A673 (cell line): ENCODE measurements at regions of chr15 and their contacts with region 1.

Region 1: DNA sequence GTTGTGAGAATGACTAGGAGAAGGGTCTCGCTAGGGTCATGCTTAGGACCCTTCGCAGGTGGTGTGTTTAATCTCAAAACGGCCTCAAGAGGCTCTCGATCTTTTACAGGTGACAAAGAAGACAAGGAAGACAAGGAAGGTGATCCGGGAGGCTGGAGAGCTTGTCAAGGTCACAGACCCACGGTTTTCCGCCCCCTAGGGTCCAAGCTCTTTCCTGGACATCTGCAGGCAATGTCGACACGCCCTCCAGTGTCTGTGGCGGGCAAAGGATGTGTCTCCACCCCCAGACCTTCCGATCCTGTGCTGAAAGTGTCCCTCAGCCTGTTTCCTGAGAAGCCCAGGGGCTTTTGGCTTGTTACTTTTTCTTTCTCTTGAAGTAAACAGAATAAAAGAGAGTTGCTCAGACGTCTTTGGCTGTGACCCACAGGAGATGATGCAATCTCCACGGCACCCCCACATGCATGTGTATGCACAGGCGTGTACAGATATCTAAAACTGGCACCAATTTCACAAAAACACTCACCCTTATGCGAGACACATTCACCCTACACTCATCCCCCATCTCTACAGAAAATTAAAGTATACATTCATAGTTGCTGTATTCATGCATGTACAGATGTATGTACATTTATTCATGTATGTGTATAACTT is 108.8 kb downstream of the KLF13 start:
- DNase-seq: no peak
- H3K4me3 ChIP-seq: no peak overlapping the region
- H3K27ac ChIP-seq: no peak overlapping the region
- H3K4me1 ChIP-seq: no peaks in the 10 kb centered on the region
- H3K27me3 ChIP-seq: no peaks in the 10 kb centered on the region
- CTCF ChIP-seq: peak; percentile 35; the same call in 1 of the 2 replicates

Region 2: DNA sequence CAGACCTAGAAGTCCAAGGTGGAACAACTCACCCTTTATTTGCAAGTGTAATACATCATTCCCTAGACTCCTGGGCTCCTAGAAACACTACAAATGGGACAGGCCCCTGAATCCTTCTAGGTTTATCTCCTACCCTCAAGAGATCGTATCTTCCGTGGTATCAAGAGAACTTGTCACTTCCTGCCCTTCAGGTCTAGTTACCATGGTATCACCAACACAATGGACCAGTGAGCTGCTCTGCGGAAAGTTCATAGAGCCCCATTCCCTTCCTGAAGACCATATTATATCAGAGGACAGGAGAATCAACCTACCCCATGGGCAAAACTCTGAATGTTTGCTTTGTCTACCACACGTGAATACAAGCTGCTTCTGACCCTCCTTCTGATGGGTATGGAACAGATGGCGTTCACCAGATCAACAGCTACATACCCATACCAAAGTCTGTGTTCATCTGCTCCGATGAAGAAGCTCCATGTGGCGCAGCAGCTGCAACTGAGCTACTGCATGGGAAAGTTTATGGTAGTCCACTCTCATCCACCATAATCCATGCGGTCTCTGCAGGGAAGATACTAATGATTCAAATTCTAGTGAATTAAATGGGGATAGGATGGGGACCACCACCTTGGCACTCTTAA is 193.4 kb before region 1 on chr15:
- CTCF ChIA-PET with region 1: no interaction called
- POLR2A ChIA-PET with region 1: no interaction called
- intact Hi-C with region 1: no loop called
- DNase-seq: no peak
- H3K4me3 ChIP-seq: no peak overlapping the region
- H3K27ac ChIP-seq: no peak overlapping the region
- H3K4me1 ChIP-seq: peaks cover 4% of the 10 kb centered on the region
- H3K27me3 ChIP-seq: no peaks in the 10 kb centered on the region
- CTCF ChIP-seq: no peak

Region 3: DNA sequence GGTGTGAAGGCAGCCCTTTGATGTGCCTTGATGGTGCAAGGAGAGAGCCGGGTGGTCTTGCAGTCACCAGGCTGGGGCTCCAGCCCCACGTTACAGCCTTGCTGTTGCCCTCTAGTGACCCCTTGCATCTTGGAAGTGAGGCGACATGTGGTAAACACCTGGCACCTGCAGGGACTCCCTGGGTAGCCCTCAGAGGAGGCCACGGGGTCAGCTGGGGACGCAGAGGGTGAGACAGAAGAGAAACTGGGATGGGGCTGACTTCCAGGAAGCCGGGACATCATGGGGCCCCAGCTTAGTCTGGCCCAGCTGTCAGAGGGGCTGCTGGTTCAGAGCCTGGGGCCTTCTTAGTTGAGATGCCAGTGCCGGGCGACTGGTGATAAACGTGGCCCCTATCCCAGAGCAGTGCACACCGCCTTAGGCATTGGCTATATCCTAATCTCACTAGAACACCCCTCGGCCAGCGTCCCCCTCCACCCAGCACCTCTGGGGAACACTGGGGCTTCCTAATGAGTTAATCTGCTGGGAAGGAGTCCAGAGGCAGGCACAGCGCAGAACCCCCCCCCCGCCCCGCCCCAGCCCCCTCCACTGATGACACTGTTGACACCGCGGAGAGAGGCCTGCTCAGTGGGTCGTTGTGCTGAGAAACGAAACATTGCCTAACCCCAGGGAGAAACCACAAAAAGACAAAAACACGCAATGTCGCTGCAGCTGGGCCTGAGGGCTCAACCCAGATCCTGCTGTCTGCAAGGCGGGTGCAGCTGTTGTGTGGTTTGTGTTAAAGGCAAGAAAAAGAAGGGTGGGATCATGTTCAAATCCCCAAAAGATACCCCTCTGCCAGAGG is 169.3 kb before region 1 on chr15:
- CTCF ChIA-PET with region 1: no interaction called
- POLR2A ChIA-PET with region 1: no interaction called
- intact Hi-C with region 1: no loop called
- DNase-seq: no peak
- H3K4me3 ChIP-seq: no peak overlapping the region
- H3K27ac ChIP-seq: no peak overlapping the region
- H3K4me1 ChIP-seq: no peaks in the 10 kb centered on the region
- H3K27me3 ChIP-seq: no peaks in the 10 kb centered on the region
- CTCF ChIP-seq: no peak

Region 4: GRCh38 chr15:31472636-31473384 is 37.4 kb after region 1 on chr15:
- CTCF ChIA-PET with region 1: no interaction called
- POLR2A ChIA-PET with region 1: no interaction called
- intact Hi-C with region 1: loop called (anchors 5 kb)
- DNase-seq: no peak
- H3K4me3 ChIP-seq: no peak overlapping the region
- H3K27ac ChIP-seq: no peak overlapping the region
- H3K4me1 ChIP-seq: no peaks in the 10 kb centered on the region
- H3K27me3 ChIP-seq: no peaks in the 10 kb centered on the region
- CTCF ChIP-seq: no peak

Region 5: DNA sequence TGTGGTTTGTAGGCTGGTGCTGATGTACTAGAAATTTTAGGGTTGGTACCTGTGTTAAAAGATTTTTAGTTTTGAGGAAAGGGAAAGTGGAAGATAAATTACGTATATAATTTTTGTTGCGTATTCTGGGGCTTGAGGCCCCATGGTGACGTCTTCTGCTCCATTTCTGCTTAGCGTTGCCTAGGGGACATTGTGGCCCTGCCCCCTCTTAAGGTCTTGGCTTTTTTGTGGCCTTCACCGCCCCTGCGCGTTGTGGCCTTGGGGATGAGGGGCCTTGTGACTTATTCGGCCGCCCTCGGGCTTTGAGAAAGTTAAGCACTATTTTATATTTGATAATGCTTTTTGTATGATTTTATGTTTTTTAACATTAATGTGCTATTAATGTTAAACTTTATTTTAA is 73.3 kb after region 1 on chr15:
- CTCF ChIA-PET with region 1: no interaction called
- POLR2A ChIA-PET with region 1: no interaction called
- intact Hi-C with region 1: no loop called
- DNase-seq: no peak
- H3K4me3 ChIP-seq: no peak overlapping the region
- H3K27ac ChIP-seq: no peak overlapping the region
- H3K4me1 ChIP-seq: no peaks in the 10 kb centered on the region
- H3K27me3 ChIP-seq: no peaks in the 10 kb centered on the region
- CTCF ChIP-seq: no peak

Region 6: GRCh38 chr15:32067115-32067514 is 631.7 kb after region 1 on chr15:
- CTCF ChIA-PET with region 1: no interaction called
- POLR2A ChIA-PET with region 1: no interaction called
- intact Hi-C with region 1: no loop called
- DNase-seq: no peak
- H3K4me3 ChIP-seq: no peak overlapping the region
- H3K27ac ChIP-seq: no peak overlapping the region
- H3K4me1 ChIP-seq: no peaks in the 10 kb centered on the region
- H3K27me3 ChIP-seq: no peaks in the 10 kb centered on the region
- CTCF ChIP-seq: no peak